ENCODE measurements at regions of chr3 and their contacts with region 1.

Region 1: GRCh38 chr3:9843715-9844438 is at the start of gene RPUSD3:
- DNase-seq: peak; percentile 97
- ATAC-seq: peak; percentile 98 to 99
- H3K4me3 ChIP-seq: peak within 1 kb of the TSS; percentile 66 to 96 (median 80)
- H3K27ac ChIP-seq: peak within 1 kb of the TSS; percentile 78 to 90 (median 85)
- H3K4me1 ChIP-seq: peaks cover 7 to 12% of the 10 kb centered on the region in 2 donors
- H3K27me3 ChIP-seq: no peaks in the 10 kb centered on the region
- CTCF ChIP-seq: no peak
- POLR2A ChIP-seq: peak; percentile 42 to 63
- total RNA-seq, gene RPUSD3: 72.7 to 96.7 (median 75.5) TPM

Region 2: DNA sequence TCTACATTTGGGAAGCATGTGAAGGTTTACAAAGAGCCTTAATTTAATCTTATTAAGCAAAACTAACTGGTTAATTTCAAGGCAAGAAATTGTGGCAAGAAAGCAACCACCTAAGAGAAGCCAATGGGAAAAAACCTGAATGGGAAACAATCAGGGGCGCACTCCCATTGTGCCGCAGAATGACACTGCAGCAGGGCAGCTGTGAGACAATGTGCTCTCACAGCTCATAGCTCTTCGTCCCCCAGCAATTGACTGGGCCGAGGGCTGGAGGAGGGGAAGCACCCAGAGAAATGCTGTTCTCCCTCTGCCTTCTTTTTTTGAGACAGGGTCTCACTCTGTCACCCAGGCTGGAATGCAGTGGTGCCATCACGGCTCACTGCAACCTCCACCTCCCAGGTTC is 787.3 kb before region 1 on chr3:
- in situ Hi-C with region 1: no loop called
- intact Hi-C with region 1: no loop called
- DNase-seq: no peak
- ATAC-seq: no peak
- H3K4me3 ChIP-seq: no peak overlapping the region
- H3K27ac ChIP-seq: no peak overlapping the region
- H3K4me1 ChIP-seq: no peaks in the 10 kb centered on the region
- H3K27me3 ChIP-seq: no peaks in the 10 kb centered on the region
- CTCF ChIP-seq: no peak
- POLR2A ChIP-seq: no peak

Region 3: DNA sequence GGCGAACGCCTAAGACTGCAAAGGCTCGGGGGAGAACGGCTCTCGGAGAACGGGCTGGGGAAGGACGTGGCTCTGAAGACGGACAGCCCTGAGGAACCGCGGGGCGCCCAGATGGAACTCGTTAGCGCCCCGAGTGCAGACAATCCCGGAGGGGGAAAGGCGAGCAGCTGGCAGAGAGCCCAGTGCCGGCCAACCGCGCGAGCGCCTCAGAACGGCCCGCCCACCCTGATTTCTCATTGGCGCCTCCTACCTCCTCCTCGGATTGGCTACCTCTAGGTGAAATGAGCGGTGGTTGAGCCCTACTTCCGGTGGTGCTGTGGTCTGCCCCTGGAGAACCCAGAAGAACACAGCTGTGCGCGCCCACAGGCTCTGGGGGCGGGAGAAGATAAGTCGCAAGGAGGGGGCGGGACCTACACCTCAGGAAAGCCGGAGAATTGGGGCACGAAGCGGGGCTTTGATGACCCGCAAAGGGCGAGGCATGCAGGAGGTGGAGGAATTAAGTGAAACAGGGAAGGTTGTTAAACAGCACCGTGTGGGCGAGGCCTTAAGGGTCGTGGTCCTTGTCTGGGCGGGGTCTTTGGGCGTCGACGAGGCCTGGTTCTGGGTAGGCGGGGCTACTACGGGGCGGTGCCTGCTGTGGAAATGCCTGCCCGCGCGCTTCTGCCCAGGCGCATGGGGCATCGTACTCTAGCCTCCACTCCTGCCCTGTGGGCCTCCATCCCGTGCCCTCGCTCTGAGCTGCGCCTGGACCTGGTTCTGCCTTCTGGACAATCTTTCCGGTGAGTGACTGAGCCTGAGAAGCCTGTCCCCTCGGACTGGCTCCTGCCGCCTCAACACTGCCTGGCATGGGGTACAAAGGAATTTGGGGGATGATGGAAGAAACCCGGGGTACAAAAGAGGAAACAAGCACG is 94.0 kb before region 1 on chr3 and contains the start of gene OGG1:
- in situ Hi-C with region 1: no loop called
- intact Hi-C with region 1: loop called (anchors 1 kb)
- DNase-seq: peak; percentile 98
- ATAC-seq: peak; percentile 98
- H3K4me3 ChIP-seq: peak within 1 kb of the TSS; percentile 77 to 95 (median 84)
- H3K27ac ChIP-seq: peak within 1 kb of the TSS; percentile 88 to 99 (median 97)
- H3K4me1 ChIP-seq: peaks cover 19 to 23% of the 10 kb centered on the region in 2 donors
- H3K27me3 ChIP-seq: no peaks in the 10 kb centered on the region
- CTCF ChIP-seq: no peak
- POLR2A ChIP-seq: peak; percentile 56 to 74
- total RNA-seq, gene OGG1: 4.1 to 13.3 (median 7.4) TPM

Region 4: GRCh38 chr3:9792405-9793160 is 51.3 kb before region 1 on chr3 and contains the starts of genes ARPC4 and TADA3:
- in situ Hi-C with region 1: no loop called
- intact Hi-C with region 1: loop called (anchors 1 kb)
- DNase-seq: peak; percentile 87 to 88
- ATAC-seq: peak; percentile 97
- H3K4me3 ChIP-seq: peak within 1 kb of the TSS; percentile 89 to 99 (median 94)
- H3K27ac ChIP-seq: peak within 1 kb of the TSS; percentile 93 to 99 (median 98)
- H3K4me1 ChIP-seq: peaks cover 20 to 27% of the 10 kb centered on the region in 2 donors
- H3K27me3 ChIP-seq: no peaks in the 10 kb centered on the region
- CTCF ChIP-seq: peak in 2 of 5 experiments; percentile 20 to 40
- POLR2A ChIP-seq: peak; percentile 63 to 83
- total RNA-seq, gene ARPC4: 96.8 to 147 (median 143) TPM
- total RNA-seq, gene TADA3: 58.1 to 83.5 (median 66.7) TPM

Region 5: GRCh38 chr3:9809615-9810432 is 34.1 kb before region 1 on chr3 and contains the start of gene TTLL3:
- in situ Hi-C with region 1: no loop called
- intact Hi-C with region 1: loop called (anchors 2 kb)
- DNase-seq: peak; percentile 52 to 72
- ATAC-seq: peak; percentile 71
- H3K4me3 ChIP-seq: peak within 1 kb of the TSS; percentile 65 to 81 (median 70)
- H3K27ac ChIP-seq: peak within 1 kb of the TSS; percentile 82 to 95 (median 88)
- H3K4me1 ChIP-seq: peaks cover 17 to 20% of the 10 kb centered on the region in 2 donors
- H3K27me3 ChIP-seq: no peaks in the 10 kb centered on the region
- CTCF ChIP-seq: no peak
- POLR2A ChIP-seq: peak; percentile 72 to 73
- total RNA-seq, gene TTLL3: 3.2 to 17.6 (median 8.5) TPM

Region 6: GRCh38 chr3:9890249-9891071 is 46.6 kb after region 1 on chr3 and contains the start of gene JAGN1:
- in situ Hi-C with region 1: no loop called
- intact Hi-C with region 1: loop called (anchors 2 kb)
- DNase-seq: peak; percentile 83 to 86
- ATAC-seq: peak; percentile 97 to 98
- H3K4me3 ChIP-seq: peak within 1 kb of the TSS; percentile 65 to 100 (median 88)
- H3K27ac ChIP-seq: peak within 1 kb of the TSS; percentile 93 to 100 (median 96)
- H3K4me1 ChIP-seq: peaks cover 7 to 11% of the 10 kb centered on the region in 2 donors
- H3K27me3 ChIP-seq: no peaks in the 10 kb centered on the region
- CTCF ChIP-seq: no peak
- POLR2A ChIP-seq: peak; percentile 91 to 93
- total RNA-seq, gene JAGN1: 42.8 to 96.4 (median 67.0) TPM